CD14-positive monocyte (primary cell): ENCODE measurements at regions of chr11 and their contacts with region 1.

Region 1: DNA sequence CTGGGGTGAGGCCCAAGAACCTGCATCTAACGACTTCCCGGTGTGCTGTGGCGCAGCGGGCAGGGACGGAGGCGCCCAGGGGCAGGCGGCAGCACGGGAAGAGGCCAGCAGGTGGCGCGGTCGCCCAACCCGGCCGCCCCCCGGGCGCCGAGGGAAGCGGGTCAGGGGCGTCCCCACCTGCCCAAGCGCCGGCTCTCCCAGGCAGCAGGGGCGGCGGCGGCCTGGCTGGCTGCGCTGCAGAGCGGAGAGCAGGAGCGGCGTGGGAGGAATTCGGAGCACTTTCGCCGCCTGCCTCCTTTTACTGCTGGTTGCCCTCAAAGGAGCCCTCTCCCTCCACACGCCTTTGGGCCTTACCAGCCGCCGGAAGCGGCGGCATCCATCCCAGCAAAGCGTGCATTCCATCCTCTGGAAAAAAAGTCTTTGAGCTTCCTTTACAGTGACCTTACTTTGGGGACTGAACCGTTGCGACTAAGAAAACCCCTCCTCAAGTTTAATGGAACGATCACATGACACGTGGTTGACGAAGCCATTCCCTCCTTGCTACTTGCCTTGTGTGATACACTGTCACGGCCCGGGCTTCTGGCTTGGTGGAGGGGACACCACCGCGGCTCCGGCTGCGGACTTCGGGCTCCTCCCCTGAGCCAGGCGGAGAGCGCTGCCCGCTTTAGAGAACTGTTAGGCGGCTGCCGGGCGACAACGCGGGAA is 106.8 kb upstream of the CLMP start:
- DNase-seq: peak; percentile 40 to 68 (median 44)
- H3K4me3 ChIP-seq: peak overlapping the region; percentile 41 to 75 (median 68)
- H3K4me3 Mint-ChIP-seq: peak overlapping the region; percentile 77 to 91
- H3K27ac ChIP-seq: no peak overlapping the region
- H3K27ac Mint-ChIP-seq: peak overlapping the region in 6 of 7 donors; percentile 26 to 81 (median 59)
- H3K4me1 ChIP-seq: peaks cover 23 to 26% of the 10 kb centered on the region in 2 donors
- H3K4me1 Mint-ChIP-seq: peaks cover 29% of the 10 kb centered on the region
- H3K27me3 ChIP-seq: peaks cover 19 to 24% of the 10 kb centered on the region in 2 donors
- H3K27me3 Mint-ChIP-seq: peaks cover 15 to 25% (median 18%) of the 10 kb centered on the region in 3 donors
- CTCF ChIP-seq: peak; percentile 98

Region 2: DNA sequence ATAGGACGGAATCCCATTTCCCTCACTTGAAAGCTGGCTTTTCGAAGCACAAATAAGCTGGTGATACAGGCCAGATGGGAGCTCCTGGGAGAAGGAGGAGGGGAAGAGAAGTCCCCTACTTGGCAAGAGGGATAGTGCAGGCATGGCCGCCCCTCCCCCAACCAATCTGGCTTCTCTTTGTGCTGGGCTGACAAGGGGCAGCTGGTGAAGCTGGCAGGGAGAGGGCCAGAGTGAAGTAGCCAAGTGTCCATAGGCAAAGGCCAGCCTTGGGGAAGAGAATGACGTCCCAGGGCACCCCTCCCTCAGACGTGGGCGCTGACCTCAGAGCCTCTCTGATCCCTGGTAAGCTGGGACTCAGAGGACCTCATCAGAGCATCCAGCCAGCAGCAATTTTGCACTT is 49.5 kb after region 1 on chr11:
- intact Hi-C with region 1: no loop called
- DNase-seq: no peak
- H3K4me3 ChIP-seq: no peak overlapping the region
- H3K4me3 Mint-ChIP-seq: no peak overlapping the region
- H3K27ac ChIP-seq: no peak overlapping the region
- H3K27ac Mint-ChIP-seq: no peak overlapping the region
- H3K4me1 ChIP-seq: no peaks in the 10 kb centered on the region
- H3K4me1 Mint-ChIP-seq: no peaks in the 10 kb centered on the region
- H3K27me3 ChIP-seq: no peaks in the 10 kb centered on the region
- H3K27me3 Mint-ChIP-seq: peaks cover 1 to 13% (median 4%) of the 10 kb centered on the region in 3 donors
- CTCF ChIP-seq: no peak

Region 3: DNA sequence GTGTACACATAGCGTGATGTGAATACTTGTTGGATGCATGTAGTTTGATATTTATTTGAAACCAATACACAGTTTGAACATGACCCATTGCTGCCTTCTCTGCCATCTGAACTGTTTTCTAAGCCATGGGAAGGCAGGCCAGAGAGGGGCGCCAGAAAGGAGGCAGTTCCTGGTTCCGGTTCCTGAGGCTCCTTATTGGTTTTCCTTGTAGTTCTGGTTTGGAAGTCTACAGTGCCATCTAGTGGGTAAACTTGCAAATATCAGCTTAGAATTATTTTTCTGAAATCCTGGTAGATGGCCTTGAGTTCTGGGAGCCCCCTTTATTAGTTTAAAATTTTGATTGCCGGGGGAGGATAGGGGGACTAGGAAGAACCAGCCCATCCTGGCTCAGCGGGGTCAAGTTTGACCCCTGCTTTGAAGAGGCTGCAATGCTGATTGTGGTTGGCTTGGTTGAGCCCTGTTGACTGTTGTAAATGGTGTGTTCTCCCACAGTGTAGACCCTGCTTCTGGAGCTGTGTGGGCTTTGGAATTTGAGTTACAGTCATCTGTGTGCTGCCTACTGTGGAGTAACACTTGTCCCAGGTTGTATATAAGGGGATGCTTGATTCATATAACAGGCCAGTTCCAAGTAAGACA is 176.6 kb after region 1 on chr11:
- intact Hi-C with region 1: loop called (anchors 2 to 5 kb)
- DNase-seq: peak; percentile 56 to 83 (median 79)
- H3K4me3 ChIP-seq: peak overlapping the region; percentile 19 to 78 (median 74)
- H3K4me3 Mint-ChIP-seq: peak overlapping the region; percentile 54 to 83
- H3K27ac ChIP-seq: peak overlapping the region; percentile 26 to 73
- H3K27ac Mint-ChIP-seq: peak overlapping the region; percentile 77 to 94 (median 86)
- H3K4me1 ChIP-seq: peaks cover 51 to 57% of the 10 kb centered on the region in 2 donors
- H3K4me1 Mint-ChIP-seq: peaks cover 75% of the 10 kb centered on the region
- H3K27me3 ChIP-seq: no peaks in the 10 kb centered on the region
- H3K27me3 Mint-ChIP-seq: no peaks in the 10 kb centered on the region
- CTCF ChIP-seq: peak; percentile 86

Region 4: GRCh38 chr11:123665306-123665705 is 363.5 kb after region 1 on chr11:
- intact Hi-C with region 1: no loop called
- DNase-seq: no peak
- H3K4me3 ChIP-seq: no peak overlapping the region
- H3K4me3 Mint-ChIP-seq: no peak overlapping the region
- H3K27ac ChIP-seq: no peak overlapping the region
- H3K27ac Mint-ChIP-seq: no peak overlapping the region
- H3K4me1 ChIP-seq: no peaks in the 10 kb centered on the region
- H3K4me1 Mint-ChIP-seq: no peaks in the 10 kb centered on the region
- H3K27me3 ChIP-seq: no peaks in the 10 kb centered on the region
- H3K27me3 Mint-ChIP-seq: peaks cover 3 to 4% (median 4%) of the 10 kb centered on the region in 3 donors
- CTCF ChIP-seq: no peak